ENCODE measurements at regions of chr2 and their contacts with region 1.

Region 1: GRCh38 chr2:197268786-197269584 is 41.6 kb downstream of the ANKRD44 start:
- DNase-seq: peak in 3 of 9 experiments; percentile 32 to 80 (median 64)
- ATAC-seq: peak; percentile 35
- H3K4me3 ChIP-seq: no peak overlapping the region
- H3K4me3 Mint-ChIP-seq: peak overlapping the region; percentile 21
- H3K27ac ChIP-seq: peak overlapping the region; percentile 30 to 73
- H3K27ac Mint-ChIP-seq: peak overlapping the region; percentile 89
- H3K4me1 ChIP-seq: peaks cover 89% of the 10 kb centered on the region
- H3K4me1 Mint-ChIP-seq: peaks cover 95% of the 10 kb centered on the region
- H3K27me3 ChIP-seq: no peaks in the 10 kb centered on the region
- H3K27me3 Mint-ChIP-seq: no peaks in the 10 kb centered on the region
- CTCF ChIP-seq: no peak

Region 2: GRCh38 chr2:197052356-197052755 is 216.6 kb before region 1 on chr2:
- CTCF ChIA-PET with region 1: no interaction called
- POLR2A ChIA-PET with region 1: no interaction called
- intact Hi-C with region 1: no loop called
- DNase-seq: no peak
- ATAC-seq: no peak
- H3K4me3 ChIP-seq: no peak overlapping the region
- H3K4me3 Mint-ChIP-seq: no peak overlapping the region
- H3K27ac ChIP-seq: no peak overlapping the region
- H3K27ac Mint-ChIP-seq: peak overlapping the region; percentile 60
- H3K4me1 ChIP-seq: no peaks in the 10 kb centered on the region
- H3K4me1 Mint-ChIP-seq: peaks cover 7% of the 10 kb centered on the region
- H3K27me3 ChIP-seq: no peaks in the 10 kb centered on the region
- H3K27me3 Mint-ChIP-seq: no peaks in the 10 kb centered on the region
- CTCF ChIP-seq: no peak

Region 3: GRCh38 chr2:197255543-197255942 is 13.4 kb before region 1 on chr2:
- CTCF ChIA-PET with region 1: interaction called, 7 read pairs
- POLR2A ChIA-PET with region 1: interaction called, 5 read pairs
- intact Hi-C with region 1: loop called in 1 of 2 experiments (anchors 2 kb)
- DNase-seq: peak; percentile 45 to 92 (median 72)
- ATAC-seq: peak; percentile 79
- H3K4me3 ChIP-seq: peak overlapping the region; percentile 9 to 38
- H3K4me3 Mint-ChIP-seq: peak overlapping the region; percentile 74
- H3K27ac ChIP-seq: peak overlapping the region; percentile 46 to 70
- H3K27ac Mint-ChIP-seq: peak overlapping the region; percentile 95
- H3K4me1 ChIP-seq: peaks cover 83% of the 10 kb centered on the region
- H3K4me1 Mint-ChIP-seq: peaks cover 82% of the 10 kb centered on the region
- H3K27me3 ChIP-seq: no peaks in the 10 kb centered on the region
- H3K27me3 Mint-ChIP-seq: no peaks in the 10 kb centered on the region
- CTCF ChIP-seq: no peak

Region 4: GRCh38 chr2:197279997-197280746 is 11.2 kb after region 1 on chr2:
- CTCF ChIA-PET with region 1: interaction called, 5 read pairs
- POLR2A ChIA-PET with region 1: interaction called, 7 read pairs
- intact Hi-C with region 1: loop called in 1 of 2 experiments (anchors 1 kb)
- DNase-seq: peak in 1 of 9 experiments; percentile 49
- ATAC-seq: peak; percentile 69
- H3K4me3 ChIP-seq: peak overlapping the region; percentile 1 to 40
- H3K4me3 Mint-ChIP-seq: peak overlapping the region; percentile 65
- H3K27ac ChIP-seq: peak overlapping the region; percentile 8 to 19
- H3K27ac Mint-ChIP-seq: peak overlapping the region; percentile 90
- H3K4me1 ChIP-seq: peaks cover 81% of the 10 kb centered on the region
- H3K4me1 Mint-ChIP-seq: peaks cover 87% of the 10 kb centered on the region
- H3K27me3 ChIP-seq: no peaks in the 10 kb centered on the region
- H3K27me3 Mint-ChIP-seq: no peaks in the 10 kb centered on the region
- CTCF ChIP-seq: no peak

Region 5: DNA sequence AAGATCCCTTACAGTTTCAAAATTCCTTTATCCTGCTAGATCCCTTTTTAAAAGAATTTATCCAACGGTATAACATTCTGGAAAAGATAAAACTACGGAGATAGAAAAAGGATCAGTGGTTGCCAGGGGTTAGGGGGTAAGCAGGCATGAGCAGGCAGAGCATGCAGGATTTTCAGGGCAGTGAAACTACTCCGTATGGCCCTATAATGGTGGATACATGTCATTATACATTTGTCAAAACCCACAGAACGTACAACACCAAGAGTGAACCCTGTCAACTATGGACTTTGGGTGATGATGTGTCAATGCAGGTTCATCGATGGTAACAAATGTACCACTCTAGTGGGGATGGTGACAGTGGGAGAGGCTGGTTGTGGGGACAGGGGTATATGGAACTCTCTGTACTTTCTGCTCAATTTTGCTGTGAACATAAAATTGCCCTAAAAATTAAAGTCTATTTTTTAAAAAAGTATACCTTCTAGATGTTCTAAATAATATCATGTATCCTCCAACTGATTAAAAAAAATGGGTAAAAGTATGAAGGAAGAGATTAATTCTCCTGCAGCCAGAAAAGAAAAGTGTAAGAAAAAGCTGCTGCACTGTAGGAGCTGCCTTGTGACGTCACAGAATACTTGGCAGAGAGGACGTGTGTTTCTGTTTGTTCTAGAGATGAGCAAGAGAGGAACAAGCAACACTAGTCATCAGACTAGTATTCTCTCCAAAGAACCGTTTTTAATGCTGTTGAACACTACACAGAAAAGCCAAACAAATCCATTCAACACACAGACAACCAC is 18.0 kb after region 1 on chr2:
- CTCF ChIA-PET with region 1: interaction called, 5 read pairs
- POLR2A ChIA-PET with region 1: interaction called, 3 read pairs
- intact Hi-C with region 1: loop called in 1 of 2 experiments (anchors 2 kb)
- DNase-seq: peak in 5 of 9 experiments; percentile 43 to 90 (median 67)
- ATAC-seq: peak; percentile 93
- H3K4me3 ChIP-seq: no peak overlapping the region
- H3K4me3 Mint-ChIP-seq: peak overlapping the region; percentile 71
- H3K27ac ChIP-seq: peak overlapping the region; percentile 26 to 66
- H3K27ac Mint-ChIP-seq: peak overlapping the region; percentile 96
- H3K4me1 ChIP-seq: peaks cover 93% of the 10 kb centered on the region
- H3K4me1 Mint-ChIP-seq: peaks cover 76% of the 10 kb centered on the region
- H3K27me3 ChIP-seq: no peaks in the 10 kb centered on the region
- H3K27me3 Mint-ChIP-seq: no peaks in the 10 kb centered on the region
- CTCF ChIP-seq: no peak